ENCODE measurements at regions of chr12 and their contacts with region 1.

Region 1: DNA sequence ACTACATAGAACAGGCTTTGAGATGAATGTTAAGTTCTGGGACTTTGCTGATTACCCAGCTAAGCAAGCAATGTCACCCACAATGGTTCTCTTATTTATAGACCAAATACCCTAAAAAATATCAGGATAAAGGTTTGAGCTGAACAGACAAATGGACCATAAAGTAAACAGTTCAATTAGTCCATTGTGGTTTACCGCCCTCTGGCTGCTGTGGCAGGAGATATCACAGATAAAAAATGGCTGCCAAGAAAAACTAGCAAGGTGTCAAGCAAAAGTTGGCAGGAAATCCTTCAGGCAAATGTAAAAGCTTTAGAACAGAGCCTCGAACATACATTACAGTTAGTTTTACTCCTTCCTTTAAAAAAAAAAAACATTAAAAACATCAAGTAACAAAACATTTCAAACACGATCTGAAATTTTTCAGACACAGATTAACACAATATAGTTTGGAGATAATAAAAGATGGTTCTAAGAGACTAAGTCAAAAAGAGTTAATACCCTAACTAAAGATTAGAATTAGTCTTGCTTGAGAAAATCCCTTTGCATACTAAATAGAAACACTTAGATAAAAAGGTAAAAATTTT is 41.3 kb downstream of the MED13L start:
- DNase-seq: peak; percentile 59
- H3K4me3 ChIP-seq: no peak overlapping the region
- H3K27ac ChIP-seq: no peak overlapping the region
- H3K4me1 ChIP-seq: no peaks in the 10 kb centered on the region
- H3K27me3 ChIP-seq: no peaks in the 10 kb centered on the region
- CTCF ChIP-seq: peak; percentile 29 to 88 (median 79)
- POLR2A ChIP-seq: no peak

Region 2: DNA sequence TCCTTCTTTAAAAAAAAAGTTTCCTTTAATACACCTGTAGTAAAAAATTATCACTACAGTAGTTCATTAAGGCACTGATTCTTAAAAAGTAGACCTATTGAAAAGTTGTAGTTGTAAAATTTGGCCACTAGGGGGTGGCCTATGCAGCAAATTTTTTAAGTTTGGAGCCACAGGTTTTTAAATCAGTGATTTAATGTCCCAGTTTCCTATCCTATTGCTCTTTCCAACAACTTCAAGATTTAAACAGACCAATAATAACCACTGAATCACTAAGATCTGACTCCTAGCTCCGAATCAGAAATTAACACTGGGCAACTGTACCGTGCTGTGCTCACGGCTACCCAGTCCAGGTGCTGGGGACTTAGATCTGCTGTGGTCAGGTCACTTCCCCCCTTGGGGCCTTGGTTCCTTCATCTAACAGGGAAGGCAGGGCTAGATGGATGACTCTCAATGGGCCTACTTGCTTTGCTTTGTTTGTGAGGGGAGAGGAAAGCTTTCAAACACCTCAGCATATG is 238.1 kb before region 1 on chr12:
- intact Hi-C with region 1: loop called (anchors 5 kb)
- DNase-seq: no peak
- H3K4me3 ChIP-seq: no peak overlapping the region
- H3K27ac ChIP-seq: peak overlapping the region; percentile 61 to 62
- H3K4me1 ChIP-seq: peaks cover 5% of the 10 kb centered on the region
- H3K27me3 ChIP-seq: no peaks in the 10 kb centered on the region
- CTCF ChIP-seq: peak; percentile 63 to 98 (median 86)
- POLR2A ChIP-seq: no peak

Region 3: GRCh38 chr12:116015525-116015924 is 220.7 kb before region 1 on chr12:
- intact Hi-C with region 1: loop called (anchors 1 kb)
- DNase-seq: no peak
- H3K4me3 ChIP-seq: no peak overlapping the region
- H3K27ac ChIP-seq: no peak overlapping the region
- H3K4me1 ChIP-seq: peaks cover 2% of the 10 kb centered on the region
- H3K27me3 ChIP-seq: no peaks in the 10 kb centered on the region
- CTCF ChIP-seq: peak in 3 of 4 experiments; percentile 47 to 69 (median 64)
- POLR2A ChIP-seq: no peak

Region 4: DNA sequence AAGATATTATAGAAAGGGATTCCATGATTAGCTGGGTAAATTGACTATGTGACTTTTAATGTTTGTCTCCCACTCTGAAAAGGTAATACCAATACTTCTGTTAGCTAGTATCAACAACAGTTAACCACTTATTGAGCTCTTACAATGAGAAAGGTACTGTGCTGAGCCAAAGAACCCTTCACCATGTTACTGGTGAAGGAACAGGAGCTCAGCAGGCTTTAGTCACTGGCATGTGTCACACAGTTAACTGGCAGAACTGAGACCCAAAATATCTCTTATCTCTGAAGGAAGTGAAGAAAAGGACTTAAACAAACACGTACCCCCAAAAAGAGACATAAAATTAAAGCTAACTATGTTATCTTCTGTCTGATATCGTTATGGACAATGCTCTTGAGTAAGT is 129.4 kb before region 1 on chr12:
- intact Hi-C with region 1: no loop called
- DNase-seq: no peak
- H3K4me3 ChIP-seq: no peak overlapping the region
- H3K27ac ChIP-seq: no peak overlapping the region
- H3K4me1 ChIP-seq: no peaks in the 10 kb centered on the region
- H3K27me3 ChIP-seq: no peaks in the 10 kb centered on the region
- CTCF ChIP-seq: no peak
- POLR2A ChIP-seq: no peak